Caco-2 (cell line): ENCODE measurements at regions of chr11 and their contacts with region 1.

Region 1: GRCh38 chr11:116454020-116454645 is 318.7 kb downstream of the BUD13 start:
- DNase-seq: peak; percentile 61 to 69
- H3K4me3 ChIP-seq: no peak overlapping the region
- H3K4me3 Mint-ChIP-seq: no peak overlapping the region
- H3K27ac Mint-ChIP-seq: no peak overlapping the region
- H3K4me1 ChIP-seq: peaks cover 14% of the 10 kb centered on the region
- H3K4me1 Mint-ChIP-seq: peaks cover 14% of the 10 kb centered on the region
- H3K27me3 ChIP-seq: no peaks in the 10 kb centered on the region
- H3K27me3 Mint-ChIP-seq: no peaks in the 10 kb centered on the region
- CTCF ChIP-seq: peak; percentile 77 to 83

Region 2: DNA sequence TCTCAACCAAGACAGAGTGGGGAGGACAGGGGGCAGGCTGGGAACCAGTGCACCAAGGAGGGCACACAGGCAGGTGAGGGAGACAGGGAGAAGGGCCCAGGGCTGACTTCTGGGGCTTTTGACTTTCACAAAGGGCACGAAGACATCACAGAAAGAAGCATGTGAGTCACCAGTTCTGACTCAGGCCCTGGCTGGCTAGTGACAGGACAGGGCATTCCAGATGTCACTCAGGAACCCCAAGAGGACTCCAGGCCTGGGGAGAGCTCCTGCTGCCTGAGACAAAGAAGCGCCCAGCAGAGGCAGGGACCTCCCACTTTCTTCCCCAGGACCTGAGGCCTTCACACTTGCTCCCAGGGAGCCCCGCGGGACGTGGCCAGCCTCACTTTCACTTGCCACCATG is 178.5 kb before region 1 on chr11:
- CTCF ChIA-PET with region 1: no interaction called
- POLR2A ChIA-PET with region 1: no interaction called
- intact Hi-C with region 1: no loop called
- DNase-seq: no peak
- H3K4me3 ChIP-seq: no peak overlapping the region
- H3K4me3 Mint-ChIP-seq: no peak overlapping the region
- H3K27ac Mint-ChIP-seq: peak overlapping the region; percentile 17
- H3K4me1 ChIP-seq: peaks cover 16% of the 10 kb centered on the region
- H3K4me1 Mint-ChIP-seq: peaks cover 18% of the 10 kb centered on the region
- H3K27me3 ChIP-seq: no peaks in the 10 kb centered on the region
- H3K27me3 Mint-ChIP-seq: no peaks in the 10 kb centered on the region
- CTCF ChIP-seq: no peak

Region 3: DNA sequence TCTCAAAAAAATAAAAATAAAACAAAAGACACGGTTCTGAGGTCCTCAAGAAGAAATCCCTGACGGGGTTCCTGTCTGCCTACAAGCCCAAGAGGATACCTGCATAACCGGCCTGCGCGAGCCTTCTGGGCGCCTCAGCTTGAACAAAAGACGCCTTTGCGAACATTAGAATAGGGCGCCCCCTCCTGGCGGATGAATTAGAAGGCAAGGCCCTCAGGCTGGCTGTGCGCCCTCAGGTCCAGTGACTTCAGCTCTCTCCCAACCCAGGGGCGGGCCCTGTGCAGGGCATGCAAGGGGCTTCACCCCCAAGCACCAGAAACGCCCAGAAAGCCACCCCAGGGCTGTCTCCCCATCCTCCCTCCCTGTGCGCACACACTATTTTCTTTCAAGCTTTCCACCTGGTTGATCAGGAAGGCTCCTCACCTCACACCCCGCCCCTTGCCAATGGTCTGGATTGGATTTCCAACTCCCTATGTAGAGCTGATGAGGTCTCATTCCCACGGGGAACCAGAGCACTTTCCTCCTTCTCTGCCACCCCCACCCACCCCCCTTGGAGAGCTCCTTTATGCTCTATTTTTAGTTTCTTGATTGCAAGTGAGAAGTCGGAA is 45.4 kb after region 1 on chr11:
- CTCF ChIA-PET with region 1: interaction called, 23 read pairs
- POLR2A ChIA-PET with region 1: no interaction called
- intact Hi-C with region 1: loop called (anchors 1 kb)
- DNase-seq: peak; percentile 89 to 92
- H3K4me3 ChIP-seq: no peak overlapping the region
- H3K4me3 Mint-ChIP-seq: no peak overlapping the region
- H3K27ac Mint-ChIP-seq: no peak overlapping the region
- H3K4me1 ChIP-seq: peaks cover 7% of the 10 kb centered on the region; the same call in 1 of the 2 replicates
- H3K4me1 Mint-ChIP-seq: no peaks in the 10 kb centered on the region
- H3K27me3 ChIP-seq: no peaks in the 10 kb centered on the region
- H3K27me3 Mint-ChIP-seq: peaks cover 3% of the 10 kb centered on the region
- CTCF ChIP-seq: peak; percentile 86 to 93